ENCODE measurements at regions of chr2 and their contacts with region 1.

Region 1: GRCh38 chr2:135709992-135710391 is 31.7 kb upstream of the UBXN4 start:
- DNase-seq: peak; percentile 19
- H3K4me3 ChIP-seq: no peak overlapping the region
- CTCF ChIP-seq: peak; percentile 94

Region 2: GRCh38 chr2:135004005-135004746 is 705.8 kb before region 1 on chr2:
- in situ Hi-C with region 1: loop called (anchors 5 kb)
- DNase-seq: peak; percentile 29
- H3K4me3 ChIP-seq: no peak overlapping the region
- CTCF ChIP-seq: peak; percentile 97

Region 3: GRCh38 chr2:135664623-135665068 is 45.3 kb before region 1 on chr2:
- in situ Hi-C with region 1: no loop called
- DNase-seq: no peak
- H3K4me3 ChIP-seq: no peak overlapping the region
- CTCF ChIP-seq: no peak

Measured in astrocyte of the cerebellum (primary cell).